ENCODE measurements at regions of chr15 and their contacts with region 1.

Region 1: DNA sequence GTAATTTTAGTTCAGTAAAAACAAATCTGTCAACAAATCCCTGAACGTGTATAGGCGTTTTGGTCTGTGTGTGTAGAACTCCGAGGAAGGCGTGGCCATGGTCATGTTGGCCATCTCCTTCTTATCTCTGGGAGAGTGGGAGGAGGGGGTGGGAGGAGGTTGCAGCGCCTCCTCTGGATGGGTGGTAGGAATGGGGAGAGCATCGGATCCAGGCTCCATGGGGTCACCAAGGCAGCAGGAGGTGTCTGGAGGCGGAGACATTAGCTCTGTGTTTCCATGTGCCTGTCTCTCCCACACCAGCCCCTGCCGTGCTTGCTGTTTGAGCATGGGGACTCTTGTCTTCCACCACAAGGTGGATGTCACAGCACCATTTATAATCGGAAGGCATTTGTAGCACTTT is 34.5 kb upstream of the TRPM1 start:
- DNase-seq: no peak
- ATAC-seq: no peak
- H3K4me3 ChIP-seq: no peak overlapping the region
- H3K27ac ChIP-seq: no peak overlapping the region
- H3K4me1 ChIP-seq: no peaks in the 10 kb centered on the region
- H3K27me3 ChIP-seq: no peaks in the 10 kb centered on the region
- CTCF ChIP-seq: no peak
- POLR2A ChIP-seq: no peak

Region 2: DNA sequence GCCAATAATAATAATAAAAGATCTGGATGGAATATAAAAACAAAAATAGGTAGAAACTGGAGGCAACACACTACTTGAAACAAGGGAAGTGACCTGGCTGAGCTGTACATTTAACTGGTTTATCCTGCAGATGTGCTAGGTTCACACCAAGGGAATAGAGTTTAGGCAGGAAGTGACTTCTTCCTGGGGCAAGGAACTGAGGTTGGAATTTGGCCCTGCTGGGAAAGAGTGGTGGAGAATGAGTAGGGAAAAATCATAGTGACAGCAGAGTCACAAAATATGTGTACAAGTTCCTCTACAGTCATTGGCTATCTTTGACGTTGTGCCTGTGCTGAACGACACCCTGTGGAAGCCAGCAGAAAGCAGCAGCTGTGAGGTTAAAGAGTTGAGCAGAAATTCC is 466.0 kb before region 1 on chr15:
- intact Hi-C with region 1: loop called in 1 of 10 experiments (anchors 10 kb)
- DNase-seq: no peak
- ATAC-seq: no peak
- H3K4me3 ChIP-seq: no peak overlapping the region
- H3K27ac ChIP-seq: no peak overlapping the region
- H3K4me1 ChIP-seq: peaks cover 0 to 5% (median 0%) of the 10 kb centered on the region in 12 donors
- H3K27me3 ChIP-seq: no peaks in the 10 kb centered on the region
- CTCF ChIP-seq: no peak
- POLR2A ChIP-seq: no peak

Region 3: GRCh38 chr15:30979457-30979856 is 156.6 kb before region 1 on chr15:
- intact Hi-C with region 1: loop called in 2 of 10 experiments (anchors 10 kb)
- DNase-seq: no peak
- ATAC-seq: peak in 2 of 4 donors; percentile 53 to 62
- H3K4me3 ChIP-seq: no peak overlapping the region
- H3K27ac ChIP-seq: peak overlapping the region in 1 of 12 donors; percentile 39
- H3K4me1 ChIP-seq: peaks cover 0 to 64% (median 34%) of the 10 kb centered on the region in 12 donors
- H3K27me3 ChIP-seq: no peaks in the 10 kb centered on the region
- CTCF ChIP-seq: no peak
- POLR2A ChIP-seq: no peak

Region 4: DNA sequence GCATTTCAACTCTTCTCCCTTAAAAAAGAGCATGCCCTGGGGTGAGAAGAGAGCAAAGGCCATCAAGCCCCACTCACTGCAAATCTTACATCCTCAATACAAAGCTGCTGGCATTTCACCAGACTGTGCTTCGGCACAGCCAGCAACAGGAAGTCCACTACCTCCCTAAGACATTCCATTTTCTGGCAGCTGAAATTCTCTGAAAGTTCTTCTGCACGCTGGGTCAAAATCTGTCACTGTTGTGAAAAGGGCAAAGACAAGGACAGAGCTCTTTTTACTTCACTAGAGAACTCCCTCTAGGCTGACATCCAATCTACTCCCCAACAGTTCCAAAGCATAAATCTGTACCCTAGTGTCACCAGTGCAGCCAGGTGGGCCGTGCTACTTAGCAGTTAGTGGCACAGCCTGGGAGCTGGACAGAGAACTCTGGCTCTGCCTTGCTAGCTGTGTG is 150.9 kb before region 1 on chr15:
- intact Hi-C with region 1: loop called in 1 of 10 experiments (anchors 10 kb)
- DNase-seq: peak in 3 of 5 donors; percentile 29 to 39 (median 32)
- ATAC-seq: peak; percentile 42 to 86 (median 54)
- H3K4me3 ChIP-seq: peak overlapping the region in 1 of 12 donors; percentile 16
- H3K27ac ChIP-seq: peak overlapping the region in 10 of 12 donors; percentile 1 to 57 (median 44)
- H3K4me1 ChIP-seq: peaks cover 0 to 88% (median 70%) of the 10 kb centered on the region in 12 donors
- H3K27me3 ChIP-seq: no peaks in the 10 kb centered on the region
- CTCF ChIP-seq: no peak
- POLR2A ChIP-seq: no peak